MCF 10A (cell line): ENCODE measurements at regions of chr2 and their contacts with region 1.

Region 1: DNA sequence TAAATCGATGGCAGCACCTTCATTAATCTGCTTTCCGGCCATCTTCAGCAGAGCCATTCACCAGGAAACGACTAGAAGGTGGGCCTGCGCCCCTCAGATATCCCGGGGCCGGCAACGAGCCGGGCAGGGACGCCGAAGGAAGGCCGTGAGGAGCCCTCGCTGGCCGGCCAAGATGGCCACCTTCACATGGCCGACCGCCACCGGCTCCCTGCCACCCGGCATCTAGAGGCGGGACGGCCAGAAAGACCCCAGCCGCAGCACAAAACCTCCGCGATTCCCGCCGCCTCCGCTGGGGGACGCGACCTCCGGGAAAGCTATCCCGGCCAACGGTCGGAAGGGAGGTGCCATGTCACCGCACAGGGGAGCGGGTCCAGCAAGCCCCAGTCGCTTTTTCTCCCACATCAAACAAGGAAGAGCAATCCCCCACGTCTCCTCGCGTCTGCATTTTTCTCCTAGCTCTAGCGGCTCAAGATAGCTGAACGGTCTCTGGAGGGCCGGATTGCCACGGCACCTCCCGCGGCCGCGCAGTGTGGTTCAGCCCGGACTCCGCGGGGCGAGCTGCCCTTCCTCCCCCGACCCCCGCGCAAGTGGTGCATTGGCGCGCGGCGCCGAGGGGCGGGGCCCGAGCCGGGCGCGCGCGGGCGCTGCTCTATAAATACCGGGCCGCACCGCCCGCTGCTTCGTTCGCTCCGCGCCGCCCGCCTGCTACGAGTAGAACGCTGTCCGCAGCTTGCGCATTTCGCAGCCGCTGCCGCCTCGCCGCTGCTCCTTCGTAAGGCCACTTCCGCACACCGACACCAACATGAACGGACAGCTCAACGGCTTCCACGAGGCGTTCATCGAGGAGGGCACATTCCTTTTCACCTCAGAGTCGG is at the start of gene MAT2A:
- DNase-seq: peak; percentile 90
- H3K4me3 Mint-ChIP-seq: peak within 1 kb of the TSS; percentile 98
- H3K27ac Mint-ChIP-seq: peak within 1 kb of the TSS; percentile 96
- H3K4me1 Mint-ChIP-seq: peaks cover 52% of the 10 kb centered on the region
- H3K27me3 Mint-ChIP-seq: no peaks in the 10 kb centered on the region
- CTCF ChIP-seq: peak; percentile 25
- total RNA-seq, gene MAT2A: 348 and 366 TPM in 2 replicates

Region 2: GRCh38 chr2:85327822-85328617 is 210.7 kb before region 1 on chr2 and contains the start of gene TGOLN2:
- CTCF ChIA-PET with region 1: interaction called, 6 read pairs
- POLR2A ChIA-PET with region 1: interaction called, 10 read pairs
- intact Hi-C with region 1: no loop called
- DNase-seq: peak; percentile 92
- H3K4me3 Mint-ChIP-seq: peak within 1 kb of the TSS; percentile 82
- H3K27ac Mint-ChIP-seq: peak within 1 kb of the TSS; percentile 94
- H3K4me1 Mint-ChIP-seq: peaks cover 16% of the 10 kb centered on the region
- H3K27me3 Mint-ChIP-seq: no peaks in the 10 kb centered on the region
- CTCF ChIP-seq: no peak
- total RNA-seq, gene TGOLN2: 62.9 and 65.5 TPM in 2 replicates

Region 3: DNA sequence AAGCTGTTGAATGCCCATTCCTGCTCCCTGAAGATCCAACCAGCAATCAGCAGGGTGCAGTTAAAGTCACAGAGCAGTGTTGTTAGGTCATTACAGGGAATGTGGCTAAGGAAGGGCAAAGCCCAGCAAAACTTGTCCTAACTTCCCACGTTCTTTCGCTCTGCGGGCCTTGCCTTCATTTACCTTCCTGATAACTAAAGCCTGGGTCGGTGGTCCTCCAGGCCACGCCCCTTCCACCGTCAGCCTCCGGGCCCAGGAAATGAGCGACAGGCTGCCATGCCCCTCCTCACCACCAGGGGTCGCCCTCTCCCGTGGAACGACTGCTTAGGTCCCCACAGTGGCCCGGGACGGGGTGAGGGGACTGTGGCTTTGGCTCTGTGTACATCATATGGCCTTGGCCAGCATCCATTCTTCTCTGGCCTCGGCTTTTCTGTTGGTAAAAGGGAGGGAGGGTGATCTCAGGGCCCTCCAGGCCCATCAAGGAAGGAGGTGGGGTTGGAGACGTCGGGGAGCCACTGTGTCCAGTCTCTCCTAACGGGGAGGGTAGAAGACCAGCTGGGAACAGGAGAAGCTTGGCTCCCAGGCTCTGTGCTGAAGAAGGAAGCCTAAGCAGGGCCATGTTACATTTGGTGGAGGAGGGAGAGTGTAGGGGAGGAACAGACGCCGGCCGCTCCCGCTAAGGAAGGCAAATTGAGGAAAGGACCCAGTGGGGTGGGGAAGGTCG is 118.0 kb before region 1 on chr2:
- CTCF ChIA-PET with region 1: interaction called, 53 read pairs
- POLR2A ChIA-PET with region 1: interaction called, 153 read pairs
- intact Hi-C with region 1: loop called (anchors 1 kb)
- DNase-seq: peak; percentile 83
- H3K4me3 Mint-ChIP-seq: peak overlapping the region; percentile 24
- H3K27ac Mint-ChIP-seq: peak overlapping the region; percentile 92
- H3K4me1 Mint-ChIP-seq: peaks cover 30% of the 10 kb centered on the region
- H3K27me3 Mint-ChIP-seq: no peaks in the 10 kb centered on the region
- CTCF ChIP-seq: peak; percentile 99

Region 4: DNA sequence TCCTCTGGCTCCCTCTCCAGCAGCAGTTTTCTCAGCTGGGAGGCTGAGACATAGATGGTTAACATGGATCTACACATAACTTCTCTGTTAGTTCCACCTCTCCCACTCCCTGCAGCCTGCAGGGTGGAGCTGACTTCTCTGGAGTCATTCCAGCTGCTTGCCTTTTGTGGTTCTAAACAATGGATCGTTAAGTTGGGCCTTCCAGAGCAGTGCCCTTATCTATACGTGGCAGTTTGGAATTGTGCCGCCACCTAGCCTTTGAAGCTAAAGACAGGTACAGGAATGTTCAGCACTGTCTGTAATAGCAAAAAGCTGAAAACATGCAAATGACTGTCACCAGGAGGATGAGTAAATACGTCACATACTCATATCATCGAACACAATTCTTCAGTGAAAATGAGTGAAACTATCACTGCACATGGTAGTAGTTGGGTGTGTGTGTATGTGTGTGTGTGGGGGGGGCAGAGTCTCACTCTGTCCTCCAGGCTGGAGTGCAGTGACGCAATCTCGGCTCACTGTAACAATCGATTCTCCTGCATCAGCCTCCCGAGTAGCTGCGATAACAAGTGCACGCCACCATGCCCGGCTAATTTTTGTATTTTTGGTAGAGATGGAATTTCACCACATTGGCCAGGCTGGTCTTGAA is 69.9 kb before region 1 on chr2:
- CTCF ChIA-PET with region 1: interaction called, 4 read pairs
- POLR2A ChIA-PET with region 1: interaction called, 84 read pairs
- intact Hi-C with region 1: no loop called
- DNase-seq: peak; percentile 87
- H3K4me3 Mint-ChIP-seq: no peak overlapping the region
- H3K27ac Mint-ChIP-seq: no peak overlapping the region
- H3K4me1 Mint-ChIP-seq: peaks cover 29% of the 10 kb centered on the region
- H3K27me3 Mint-ChIP-seq: no peaks in the 10 kb centered on the region
- CTCF ChIP-seq: no peak

Region 5: DNA sequence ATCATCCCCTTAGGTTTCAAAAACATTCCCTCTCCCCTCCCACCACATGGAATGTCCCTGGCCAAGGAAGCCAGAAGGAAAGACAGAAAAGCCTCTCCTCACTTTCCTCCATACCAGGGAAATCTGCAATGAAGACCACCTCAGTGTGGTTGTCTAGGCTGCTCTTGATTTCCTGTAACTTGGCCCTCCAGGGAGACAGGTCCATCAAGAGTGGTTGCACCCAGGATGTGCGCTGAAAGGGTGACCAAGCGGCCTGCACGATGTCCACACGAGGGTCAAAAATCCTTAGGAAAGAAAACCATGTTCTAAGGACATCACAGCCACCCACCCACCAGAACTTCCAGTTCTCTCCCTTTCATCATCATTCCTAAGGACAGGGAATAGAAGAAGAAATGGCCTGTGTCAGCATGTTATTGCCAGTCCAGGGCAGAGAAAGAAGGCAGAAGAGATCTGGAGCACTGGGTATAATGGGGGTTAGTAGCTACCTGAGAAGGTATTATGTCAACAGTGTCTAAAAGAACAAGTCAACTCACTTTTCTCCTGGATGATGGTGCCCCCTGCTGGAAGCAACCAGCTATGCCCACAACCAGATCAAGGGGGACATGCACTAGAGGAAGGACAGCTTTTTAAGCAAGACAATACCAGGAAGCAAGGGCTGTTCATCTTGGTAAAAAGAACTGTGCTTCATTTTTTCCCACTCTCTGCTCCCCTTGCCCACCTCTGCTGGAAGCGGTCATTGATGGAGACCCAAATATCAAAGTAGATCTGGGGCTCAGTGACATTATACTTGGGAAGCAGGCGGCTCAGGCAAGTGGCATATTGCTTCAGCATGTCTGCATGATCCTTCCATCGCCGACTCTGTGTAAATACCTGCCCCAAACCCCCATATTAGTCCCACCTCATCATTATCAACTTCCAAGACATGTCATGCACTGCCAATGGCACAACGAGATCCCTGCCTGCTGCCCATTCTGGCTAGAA is 13.3 kb after region 1 on chr2:
- CTCF ChIA-PET with region 1: interaction called, 38 read pairs
- POLR2A ChIA-PET with region 1: interaction called, 103 read pairs
- intact Hi-C with region 1: no loop called
- DNase-seq: peak; percentile 88
- H3K4me3 Mint-ChIP-seq: no peak overlapping the region
- H3K27ac Mint-ChIP-seq: no peak overlapping the region
- H3K4me1 Mint-ChIP-seq: peaks cover 1% of the 10 kb centered on the region
- H3K27me3 Mint-ChIP-seq: no peaks in the 10 kb centered on the region
- CTCF ChIP-seq: peak; percentile 87

Region 6: GRCh38 chr2:85595301-85596025 is 56.7 kb after region 1 on chr2 and contains the start of gene RNF181:
- CTCF ChIA-PET with region 1: interaction called, 4 read pairs
- POLR2A ChIA-PET with region 1: interaction called, 11 read pairs
- intact Hi-C with region 1: no loop called
- DNase-seq: peak; percentile 99
- H3K4me3 Mint-ChIP-seq: peak within 1 kb of the TSS; percentile 98
- H3K27ac Mint-ChIP-seq: peak within 1 kb of the TSS; percentile 98
- H3K4me1 Mint-ChIP-seq: peaks cover 19% of the 10 kb centered on the region
- H3K27me3 Mint-ChIP-seq: no peaks in the 10 kb centered on the region
- CTCF ChIP-seq: no peak
- total RNA-seq, gene RNF181: 125 and 215 TPM in 2 replicates

Region 7: DNA sequence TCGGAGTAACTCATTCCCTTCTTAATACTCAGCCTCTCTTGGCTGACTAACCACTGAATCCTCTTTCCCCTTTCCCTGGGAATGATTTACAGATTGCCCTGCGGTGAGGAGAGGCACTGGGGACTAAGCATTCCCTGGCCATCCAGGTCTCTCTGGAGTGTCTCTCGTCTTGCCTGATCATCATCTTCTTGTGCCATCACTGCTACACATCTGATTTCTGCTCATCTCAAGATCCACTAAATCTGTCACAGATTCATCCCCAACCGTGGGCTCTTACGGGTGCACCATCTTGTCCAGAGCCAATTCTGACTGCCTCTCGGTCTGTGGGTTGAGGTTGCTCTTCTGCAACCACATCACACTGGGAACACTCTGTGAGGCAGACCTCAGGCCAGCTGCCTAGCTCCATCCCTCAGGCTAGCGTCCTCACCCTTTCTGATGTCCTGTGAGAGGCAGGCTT is 117.3 kb after region 1 on chr2:
- CTCF ChIA-PET with region 1: no interaction called
- POLR2A ChIA-PET with region 1: no interaction called
- intact Hi-C with region 1: no loop called
- DNase-seq: no peak
- H3K4me3 Mint-ChIP-seq: no peak overlapping the region
- H3K27ac Mint-ChIP-seq: no peak overlapping the region
- H3K4me1 Mint-ChIP-seq: no peaks in the 10 kb centered on the region
- H3K27me3 Mint-ChIP-seq: no peaks in the 10 kb centered on the region
- CTCF ChIP-seq: no peak